ENCODE measurements at regions of chr15 and their contacts with region 1.

Region 1: GRCh38 chr15:57561041-57561711 is 30.5 kb upstream of the MYZAP start:
- DNase-seq: peak; percentile 81
- ATAC-seq: peak; percentile 91

Region 2: DNA sequence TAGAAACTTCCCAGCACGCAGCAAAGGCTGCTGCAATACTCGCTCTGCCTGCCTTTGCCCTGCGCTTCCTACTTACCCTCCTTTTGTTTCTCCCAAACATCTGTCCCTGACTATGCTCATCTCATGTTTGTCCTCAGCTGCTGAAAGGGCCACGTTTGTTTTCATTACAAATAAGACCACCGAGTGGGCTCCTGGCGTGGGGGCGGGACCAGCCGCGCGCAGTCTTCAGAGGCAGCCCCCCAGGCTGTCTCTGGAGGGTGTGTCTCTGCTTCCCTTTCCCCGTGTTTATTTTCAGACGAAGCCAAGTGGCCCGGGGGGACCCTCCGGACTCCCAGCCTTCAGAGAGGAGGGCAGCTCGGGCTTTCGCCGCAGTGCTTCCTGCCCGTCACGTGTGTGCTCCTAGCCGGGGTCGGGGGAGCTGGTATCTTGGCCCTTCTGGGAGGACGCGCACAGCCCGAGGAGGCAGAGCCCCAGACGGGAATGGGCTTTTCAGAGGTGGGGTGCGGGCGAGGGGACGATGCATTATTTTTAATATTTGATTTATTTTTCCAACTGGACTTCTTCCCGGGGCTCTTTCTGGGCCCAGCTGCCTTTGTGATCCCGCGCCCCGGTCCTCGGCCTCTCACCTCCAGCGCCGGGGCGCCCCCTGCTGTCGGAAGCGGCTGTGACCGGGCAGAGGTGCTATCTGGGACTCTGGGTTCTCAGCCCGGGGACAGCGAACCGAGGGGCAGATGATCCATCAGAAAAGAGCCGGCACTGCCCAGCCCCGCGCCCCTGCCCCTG is 254.8 kb before region 1 on chr15:
- intact Hi-C with region 1: no loop called
- DNase-seq: peak; percentile 95
- ATAC-seq: peak; percentile 88

Region 3: DNA sequence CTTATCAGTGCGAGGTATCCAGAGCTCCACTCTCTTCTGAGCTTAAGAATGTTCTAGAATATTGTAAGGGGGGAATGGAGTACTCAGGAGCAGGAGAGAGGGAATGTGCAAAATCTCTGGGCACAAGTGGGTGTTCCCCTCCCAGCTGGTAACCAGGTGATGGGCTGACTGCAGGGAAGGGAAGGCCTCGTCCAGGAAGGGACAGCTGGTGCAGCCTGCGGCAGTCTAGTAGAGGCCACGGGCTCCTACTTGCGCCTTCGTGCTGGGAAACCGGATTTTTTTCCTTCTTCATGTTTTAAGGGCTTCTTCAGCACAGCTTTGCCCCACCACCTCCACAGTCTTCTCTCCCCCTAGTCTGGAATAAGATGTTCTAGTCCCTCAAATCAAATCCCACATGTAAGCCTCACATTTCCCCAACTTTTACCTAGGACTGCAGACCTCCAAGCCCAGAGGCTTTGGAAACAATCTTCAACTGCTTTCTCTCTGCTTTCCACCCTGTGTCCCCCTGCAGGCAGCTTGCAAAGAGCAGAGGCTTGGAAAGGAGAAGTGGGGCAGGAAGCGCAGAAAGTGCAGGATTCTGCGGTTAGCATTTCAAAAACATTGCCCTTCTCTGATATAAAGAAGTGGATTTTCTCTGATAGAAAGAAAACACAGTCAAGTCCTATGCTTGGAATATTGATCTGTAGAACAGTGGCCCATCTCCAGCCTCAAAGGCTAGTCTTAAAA is 196.7 kb before region 1 on chr15:
- intact Hi-C with region 1: no loop called
- DNase-seq: no peak
- ATAC-seq: peak; percentile 48

Region 4: GRCh38 chr15:57611938-57612337 is 50.8 kb after region 1 on chr15:
- intact Hi-C with region 1: loop called (anchors 2 kb)
- DNase-seq: no peak
- ATAC-seq: peak; percentile 60

Region 5: GRCh38 chr15:57647791-57648130 is 86.6 kb after region 1 on chr15:
- intact Hi-C with region 1: loop called (anchors 2 kb)
- DNase-seq: no peak
- ATAC-seq: peak; percentile 23

Region 6: GRCh38 chr15:57706405-57707209 is 145.4 kb after region 1 on chr15 and contains the start of gene POLR2M:
- intact Hi-C with region 1: loop called (anchors 10 kb)
- DNase-seq: peak; percentile 96
- ATAC-seq: peak; percentile 94
- total RNA-seq, gene POLR2M: 42.6 TPM

Region 7: DNA sequence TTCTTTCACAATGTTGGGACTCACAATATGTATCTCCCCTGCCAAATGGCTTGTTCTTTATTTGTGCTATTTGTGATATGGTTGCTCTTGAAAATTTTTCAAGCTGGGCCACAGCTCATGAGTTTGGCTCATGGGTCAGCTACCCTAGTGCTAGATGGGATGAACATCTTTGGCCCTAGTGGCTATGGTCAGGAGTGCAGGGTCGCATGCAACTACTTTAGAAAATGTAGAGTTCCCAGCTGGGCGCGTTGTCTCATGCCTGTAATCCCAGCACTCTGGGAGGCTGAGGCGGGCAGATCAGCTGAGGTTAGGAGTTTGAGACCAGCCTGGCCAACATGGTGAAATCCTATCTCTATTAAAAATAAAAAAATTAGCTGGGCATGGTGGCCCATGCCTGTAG is 201.1 kb after region 1 on chr15:
- intact Hi-C with region 1: no loop called
- DNase-seq: no peak
- ATAC-seq: no peak

Region 8: DNA sequence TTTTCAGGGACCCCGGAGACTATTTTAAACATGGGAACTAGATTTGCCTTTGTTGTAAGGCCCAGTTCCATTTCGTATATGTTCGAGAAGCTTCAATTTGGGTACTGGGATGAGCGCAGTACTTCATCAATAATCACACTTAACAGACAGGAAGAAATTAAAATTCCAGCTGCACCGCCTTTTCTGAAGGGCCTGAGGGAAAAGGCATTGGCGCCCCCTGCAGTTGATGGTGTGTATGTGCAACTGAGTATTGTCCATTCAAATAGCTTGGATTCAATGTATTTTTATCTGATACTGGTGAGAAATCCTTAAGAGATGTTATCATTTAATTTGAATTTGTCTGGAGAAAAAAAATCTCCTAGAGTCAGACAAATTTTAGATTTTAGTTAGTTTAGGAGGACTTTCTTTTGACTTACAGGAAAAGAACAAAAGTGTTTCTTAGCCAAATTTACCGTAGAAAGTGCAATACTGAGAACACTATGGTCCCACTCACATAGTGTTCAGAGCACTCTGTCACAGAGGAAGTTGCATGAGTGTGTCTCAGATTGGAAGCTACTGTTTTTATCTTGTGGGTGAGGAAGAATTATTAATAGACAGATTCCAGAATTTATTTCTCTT is 509.7 kb after region 1 on chr15:
- intact Hi-C with region 1: loop called (anchors 5 kb)
- DNase-seq: peak; percentile 68
- ATAC-seq: no peak